Ovary (tissue), 10 donors: ENCODE measurements at regions of chrX and their contacts with region 1.

Region 1: DNA sequence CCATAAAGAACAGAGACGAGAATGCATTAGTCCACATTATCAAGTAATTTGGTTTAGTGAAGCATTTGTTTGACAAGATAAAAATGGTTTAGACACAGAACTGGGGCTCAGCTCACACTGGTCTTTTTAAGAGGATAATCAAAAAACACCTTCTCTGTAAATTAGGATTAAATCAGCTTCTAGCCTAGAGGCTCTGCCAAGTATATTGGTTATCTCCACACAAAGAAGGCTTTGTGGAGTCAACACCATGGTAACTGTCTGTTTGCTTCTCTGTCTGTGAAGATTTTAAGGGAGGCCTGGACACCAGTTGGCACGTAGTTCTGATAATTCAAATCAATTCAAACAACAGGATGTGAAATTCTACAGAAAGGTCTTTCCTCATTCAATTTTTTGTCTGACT is 687.0 kb downstream of the DMD start:
- DNase-seq: no peak
- H3K4me3 ChIP-seq: no peak overlapping the region
- H3K27ac ChIP-seq: no peak overlapping the region
- H3K4me1 ChIP-seq: no peaks in the 10 kb centered on the region
- H3K27me3 ChIP-seq: no peaks in the 10 kb centered on the region
- CTCF ChIP-seq: no peak
- EP300 ChIP-seq: no peak
- POLR2A ChIP-seq: no peak

Region 2: GRCh38 chrX:32455704-32456103 is 68.7 kb before region 1 on chrX:
- intact Hi-C with region 1: no loop called
- DNase-seq: no peak
- H3K4me3 ChIP-seq: no peak overlapping the region
- H3K27ac ChIP-seq: no peak overlapping the region
- H3K4me1 ChIP-seq: no peaks in the 10 kb centered on the region
- H3K27me3 ChIP-seq: no peaks in the 10 kb centered on the region
- CTCF ChIP-seq: no peak
- EP300 ChIP-seq: no peak
- POLR2A ChIP-seq: no peak

Region 3: GRCh38 chrX:32877592-32877991 is 353.2 kb after region 1 on chrX:
- intact Hi-C with region 1: no loop called
- DNase-seq: no peak
- H3K4me3 ChIP-seq: no peak overlapping the region
- H3K27ac ChIP-seq: no peak overlapping the region
- H3K4me1 ChIP-seq: no peaks in the 10 kb centered on the region
- H3K27me3 ChIP-seq: no peaks in the 10 kb centered on the region
- CTCF ChIP-seq: no peak
- EP300 ChIP-seq: no peak
- POLR2A ChIP-seq: no peak

Region 4: DNA sequence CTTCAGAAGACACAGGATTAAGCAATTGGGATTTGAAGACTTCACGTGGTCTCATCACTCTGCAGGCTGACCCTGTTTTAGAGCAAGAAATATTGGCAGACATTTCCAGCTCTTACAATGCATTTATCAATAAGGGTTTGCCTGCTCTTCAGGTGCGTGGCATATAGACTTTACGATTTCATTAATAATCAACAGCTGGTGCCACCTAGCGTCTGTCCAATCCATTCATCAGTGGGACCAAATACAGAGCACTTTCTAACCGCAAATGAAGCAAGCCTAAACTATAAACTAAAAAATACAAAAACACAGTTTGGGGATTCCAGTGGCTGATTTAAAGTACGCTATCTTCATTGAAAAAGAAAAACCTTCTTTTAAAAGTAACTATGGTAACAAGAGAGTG is 812.4 kb after region 1 on chrX:
- intact Hi-C with region 1: loop called in 1 of 4 experiments (anchors 10 kb)
- DNase-seq: peak in 2 of 5 donors; percentile 24 to 27
- H3K4me3 ChIP-seq: no peak overlapping the region
- H3K27ac ChIP-seq: no peak overlapping the region
- H3K4me1 ChIP-seq: no peaks in the 10 kb centered on the region
- H3K27me3 ChIP-seq: no peaks in the 10 kb centered on the region
- CTCF ChIP-seq: peak in 1 of 3 donors; percentile 23
- EP300 ChIP-seq: no peak
- POLR2A ChIP-seq: no peak

Region 5: DNA sequence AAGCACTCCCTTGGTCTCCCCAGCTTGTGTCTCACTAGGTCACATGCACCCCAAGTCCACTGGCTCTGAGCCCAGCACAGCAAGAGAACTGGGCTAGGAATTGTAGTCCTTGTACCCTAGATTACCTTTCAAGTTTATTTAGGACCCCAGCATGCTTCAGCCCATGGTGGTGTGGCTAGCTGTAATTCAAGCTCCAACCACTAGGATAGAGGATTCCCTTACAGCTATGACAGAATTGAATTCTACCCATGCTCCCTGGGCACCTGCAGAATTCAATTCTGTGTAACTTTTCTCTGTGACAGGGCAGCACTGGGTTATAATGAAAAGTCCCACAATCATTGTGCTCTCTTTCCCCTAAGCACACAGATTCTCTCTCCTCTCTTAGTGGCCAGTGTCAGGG is 940.8 kb after region 1 on chrX:
- intact Hi-C with region 1: no loop called
- DNase-seq: no peak
- H3K4me3 ChIP-seq: no peak overlapping the region
- H3K27ac ChIP-seq: no peak overlapping the region
- H3K4me1 ChIP-seq: no peaks in the 10 kb centered on the region
- H3K27me3 ChIP-seq: no peaks in the 10 kb centered on the region
- CTCF ChIP-seq: no peak
- EP300 ChIP-seq: no peak
- POLR2A ChIP-seq: no peak